Activated T-helper 1 cell treated with anti-CD3 and anti-CD28 coated beads, Interleukin-12 subunit alpha, Interleukin-12 subunit beta, Interleukin-2, Interleukin-4 antibody, amounts not matched to agents 30 ng/mL and 10 ng/mL and 1 ng/mL, durations not matched to agents 14 hours and 24 hours and 36 hours (primary cell): ENCODE measurements at regions of chr21 and their contacts with region 1.

Region 1: DNA sequence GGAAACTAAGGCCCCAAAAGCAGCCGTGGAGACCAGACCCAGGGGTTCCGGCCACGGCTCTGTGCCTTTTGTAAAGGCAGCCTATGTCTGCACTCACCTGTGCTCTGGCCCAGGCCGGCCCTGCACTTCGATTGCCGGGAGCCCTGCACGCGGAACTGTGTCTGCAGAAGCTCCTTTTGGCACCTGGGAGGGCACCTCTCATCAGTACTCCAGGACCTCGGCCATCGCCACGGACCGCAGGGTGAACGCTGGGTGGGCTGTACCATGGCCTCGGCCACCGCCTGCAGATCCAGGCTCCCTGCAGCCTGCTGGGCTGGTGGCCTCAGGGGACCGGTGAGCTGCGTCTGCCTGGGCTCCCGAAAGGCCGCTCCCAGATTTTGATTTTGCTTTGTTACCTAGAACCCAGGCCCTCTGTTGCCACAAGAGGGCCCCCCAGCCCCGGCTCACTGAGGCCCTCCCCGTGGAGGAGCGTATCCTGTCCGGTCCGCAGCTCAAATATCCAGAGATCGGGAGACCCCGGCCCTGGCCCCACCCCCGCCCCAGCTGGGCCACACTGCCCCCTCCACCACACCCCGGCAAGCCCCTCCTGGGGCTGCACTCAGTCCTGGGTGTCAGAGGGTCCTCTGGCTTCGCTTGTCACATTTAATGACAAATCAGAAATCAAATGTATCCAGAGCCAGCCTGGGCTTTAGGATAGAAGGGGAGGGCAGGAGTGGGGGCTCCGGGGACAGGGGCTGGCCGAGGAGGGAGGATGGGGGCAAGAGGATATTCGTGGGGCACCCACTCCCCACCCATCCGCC is 60.2 kb upstream of the PDE9A start:
- DNase-seq: peak; percentile 50
- H3K4me3 Mint-ChIP-seq: no peak overlapping the region
- H3K27ac Mint-ChIP-seq: no peak overlapping the region
- H3K4me1 Mint-ChIP-seq: peaks cover 6% of the 10 kb centered on the region
- H3K27me3 Mint-ChIP-seq: no peaks in the 10 kb centered on the region

Region 2: GRCh38 chr21:42276526-42277154 is 316.6 kb before region 1 on chr21:
- intact Hi-C with region 1: no loop called
- DNase-seq: no peak
- H3K4me3 Mint-ChIP-seq: no peak overlapping the region
- H3K27ac Mint-ChIP-seq: no peak overlapping the region
- H3K4me1 Mint-ChIP-seq: no peaks in the 10 kb centered on the region
- H3K27me3 Mint-ChIP-seq: no peaks in the 10 kb centered on the region

Region 3: DNA sequence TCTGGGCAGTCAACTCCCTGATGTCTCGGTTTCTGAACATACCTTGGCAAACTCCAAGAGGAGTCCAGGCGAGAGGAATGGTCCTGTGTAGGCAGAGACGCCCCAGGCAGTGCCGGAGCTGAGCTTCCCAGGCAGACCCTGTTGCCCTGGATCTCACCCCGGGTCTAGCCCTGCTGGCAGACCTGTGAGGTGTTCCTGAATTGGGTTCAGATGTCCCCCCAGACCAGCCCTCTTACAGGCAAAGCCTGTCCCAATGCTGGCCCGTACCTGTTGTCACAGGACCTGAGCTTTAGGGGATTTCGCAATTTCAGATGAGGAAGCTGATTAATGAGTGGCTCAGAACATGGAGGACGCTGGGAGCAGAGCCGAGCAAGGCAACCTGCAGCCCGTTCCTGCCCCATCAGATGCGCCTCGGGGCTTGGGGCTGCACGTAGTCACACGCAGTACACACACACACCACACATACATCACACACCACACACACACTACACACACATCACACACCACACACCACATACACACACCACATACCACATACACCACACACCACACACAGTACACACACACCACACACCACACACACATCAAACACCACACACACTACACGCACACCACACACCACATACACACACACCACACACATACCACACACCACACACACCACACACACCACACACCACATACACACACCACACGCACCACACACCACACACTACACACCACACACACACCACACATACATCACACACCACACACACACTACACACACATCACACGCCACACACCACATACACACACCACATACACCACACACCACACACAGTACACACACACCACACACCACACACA is 21.8 kb after region 1 on chr21:
- intact Hi-C with region 1: loop called (anchors 2 kb)
- DNase-seq: peak; percentile 48
- H3K4me3 Mint-ChIP-seq: no peak overlapping the region
- H3K27ac Mint-ChIP-seq: no peak overlapping the region
- H3K4me1 Mint-ChIP-seq: no peaks in the 10 kb centered on the region
- H3K27me3 Mint-ChIP-seq: peaks cover 18% of the 10 kb centered on the region

Region 4: DNA sequence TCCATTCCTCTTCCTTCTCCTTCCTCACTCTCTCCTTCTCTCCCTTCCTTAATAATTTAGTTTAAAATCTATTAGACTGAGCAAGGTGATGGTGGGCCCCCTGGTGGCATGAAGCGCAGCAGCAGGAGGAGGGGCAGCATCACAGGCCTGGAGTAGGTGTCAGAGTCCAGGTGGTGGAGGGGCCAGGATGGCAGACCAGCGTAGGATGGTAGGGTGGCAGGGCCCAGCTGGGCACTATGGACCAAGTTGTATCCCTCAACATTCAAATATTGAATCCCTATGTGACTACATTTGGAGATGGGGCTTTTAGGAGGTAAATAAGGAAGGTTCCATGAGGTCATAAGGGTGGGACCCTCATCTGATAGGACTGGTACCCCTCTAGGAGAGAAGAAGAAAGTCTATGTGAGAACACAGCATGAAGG is 225.1 kb after region 1 on chr21:
- intact Hi-C with region 1: loop called (anchors 1 kb)
- DNase-seq: peak; percentile 17
- H3K4me3 Mint-ChIP-seq: no peak overlapping the region
- H3K27ac Mint-ChIP-seq: no peak overlapping the region
- H3K4me1 Mint-ChIP-seq: no peaks in the 10 kb centered on the region
- H3K27me3 Mint-ChIP-seq: peaks cover 2% of the 10 kb centered on the region

Region 5: GRCh38 chr21:42833439-42833815 is 240.2 kb after region 1 on chr21:
- intact Hi-C with region 1: loop called (anchors 1 kb)
- DNase-seq: peak; percentile 40
- H3K4me3 Mint-ChIP-seq: peak overlapping the region; percentile 71
- H3K27ac Mint-ChIP-seq: peak overlapping the region; percentile 59
- H3K4me1 Mint-ChIP-seq: peaks cover 23% of the 10 kb centered on the region
- H3K27me3 Mint-ChIP-seq: peaks cover 7% of the 10 kb centered on the region